ENCODE measurements at regions of chr11 and their contacts with region 1.

Region 1: DNA sequence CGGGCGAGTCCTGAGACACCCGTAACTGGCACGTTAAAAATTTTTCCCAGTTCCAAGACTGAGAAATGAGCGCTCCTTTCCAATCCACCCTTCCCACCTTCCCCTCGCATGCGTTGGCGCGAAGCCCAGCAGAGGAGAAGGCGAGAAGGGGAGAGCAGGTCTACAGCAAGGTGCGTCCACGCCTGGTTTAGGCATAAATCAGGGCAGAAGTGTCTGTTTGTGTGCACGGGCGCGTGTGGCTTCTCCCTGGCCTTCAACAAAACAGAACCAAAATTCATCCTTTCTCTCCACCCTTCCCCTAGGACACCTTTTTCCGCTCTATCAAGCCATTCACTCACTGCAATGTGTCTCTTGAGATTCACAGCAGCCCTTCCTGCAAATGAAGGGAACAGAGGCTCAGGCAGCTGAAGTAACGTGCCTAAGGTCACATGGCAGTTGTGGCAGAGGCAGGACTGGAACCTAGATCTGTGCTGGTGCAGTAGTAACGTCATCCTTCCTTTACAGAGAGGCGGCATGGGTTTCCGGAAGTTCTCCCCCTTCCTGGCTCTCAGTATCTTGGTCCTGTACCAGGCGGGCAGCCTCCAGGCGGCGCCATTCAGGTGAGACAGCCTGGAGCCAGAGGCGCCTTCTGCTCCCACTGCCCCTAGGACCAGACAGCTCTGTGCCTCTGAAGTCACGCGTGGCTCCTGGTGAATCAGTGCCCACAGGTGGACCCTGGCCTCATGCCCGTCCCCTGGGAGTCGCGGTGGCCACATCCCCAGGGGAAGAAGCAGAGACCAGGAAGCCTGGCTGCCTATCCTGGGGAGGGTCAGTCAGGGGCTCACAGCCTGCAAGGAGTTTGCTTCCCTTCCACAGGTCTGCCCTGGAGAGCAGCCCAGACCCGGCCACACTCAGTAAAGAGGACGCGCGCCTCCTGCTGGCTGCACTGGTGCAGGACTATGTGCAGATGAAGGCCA is 1.1 kb downstream of the CALCB start:
- DNase-seq: no peak
- H3K4me3 ChIP-seq: no peak overlapping the region
- H3K27me3 ChIP-seq: peaks cover 21% of the 10 kb centered on the region
- CTCF ChIP-seq: peak; percentile 77

Region 2: DNA sequence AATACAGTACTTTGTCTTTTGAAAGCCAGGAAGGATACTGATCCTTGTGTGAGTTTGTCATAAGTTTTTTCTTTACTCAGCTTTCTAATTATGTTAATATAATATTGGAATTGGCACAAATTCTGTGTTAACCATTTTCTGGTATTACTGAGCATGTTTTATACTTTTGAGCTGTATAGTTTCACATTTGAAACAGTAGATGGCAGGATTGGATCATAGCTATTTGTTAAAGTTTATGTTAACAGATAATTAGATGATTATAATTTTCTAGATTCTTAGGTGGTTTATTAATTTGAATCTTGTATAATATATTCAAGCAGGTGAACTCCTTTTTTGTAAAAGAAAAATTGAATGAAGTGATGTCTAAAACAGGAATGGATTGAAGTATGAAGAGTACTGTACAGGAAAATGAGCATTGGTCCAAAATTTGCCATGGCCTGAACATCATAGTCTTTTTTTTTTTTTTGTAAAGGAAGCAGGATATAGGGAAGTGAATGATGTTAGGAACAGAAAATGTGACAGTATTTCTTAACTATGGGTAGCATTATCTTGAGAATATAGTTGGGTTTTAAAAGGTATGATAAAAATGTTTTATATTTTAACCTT is 284.5 kb before region 1 on chr11:
- CTCF ChIA-PET with region 1: interaction called, 27 read pairs
- POLR2A ChIA-PET with region 1: no interaction called
- DNase-seq: no peak
- H3K4me3 ChIP-seq: no peak overlapping the region
- H3K27me3 ChIP-seq: no peaks in the 10 kb centered on the region
- CTCF ChIP-seq: peak; percentile 41

Region 3: GRCh38 chr11:14974515-14975251 is 99.8 kb before region 1 on chr11:
- CTCF ChIA-PET with region 1: interaction called, 11 read pairs
- POLR2A ChIA-PET with region 1: no interaction called
- DNase-seq: no peak
- H3K4me3 ChIP-seq: no peak overlapping the region
- H3K27me3 ChIP-seq: peaks cover 43% of the 10 kb centered on the region
- CTCF ChIP-seq: peak; percentile 55

Region 4: DNA sequence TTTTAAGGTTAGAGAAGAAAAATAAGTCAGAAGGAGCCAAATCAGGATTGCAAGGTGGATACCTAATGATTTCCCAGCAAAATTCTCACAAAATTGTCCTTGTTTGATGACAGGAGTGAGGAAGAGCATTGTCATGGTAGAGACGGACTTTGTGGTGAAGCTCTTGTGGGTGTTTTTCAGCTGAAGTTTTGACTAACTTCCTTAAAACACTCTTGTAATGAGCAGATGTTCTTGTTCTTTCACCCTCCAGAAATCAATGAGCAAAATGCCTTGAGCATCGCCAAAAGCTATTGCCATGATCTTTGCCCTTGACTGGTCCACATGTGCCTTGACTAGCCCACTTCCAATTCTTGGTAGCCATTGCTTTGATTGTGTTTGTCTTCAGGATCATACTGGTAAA is 18.9 kb after region 1 on chr11:
- CTCF ChIA-PET with region 1: interaction called, 11 read pairs
- POLR2A ChIA-PET with region 1: no interaction called
- DNase-seq: no peak
- H3K4me3 ChIP-seq: no peak overlapping the region
- H3K27me3 ChIP-seq: no peaks in the 10 kb centered on the region; the same call in none of the 2 replicates
- CTCF ChIP-seq: no peak

Region 5: DNA sequence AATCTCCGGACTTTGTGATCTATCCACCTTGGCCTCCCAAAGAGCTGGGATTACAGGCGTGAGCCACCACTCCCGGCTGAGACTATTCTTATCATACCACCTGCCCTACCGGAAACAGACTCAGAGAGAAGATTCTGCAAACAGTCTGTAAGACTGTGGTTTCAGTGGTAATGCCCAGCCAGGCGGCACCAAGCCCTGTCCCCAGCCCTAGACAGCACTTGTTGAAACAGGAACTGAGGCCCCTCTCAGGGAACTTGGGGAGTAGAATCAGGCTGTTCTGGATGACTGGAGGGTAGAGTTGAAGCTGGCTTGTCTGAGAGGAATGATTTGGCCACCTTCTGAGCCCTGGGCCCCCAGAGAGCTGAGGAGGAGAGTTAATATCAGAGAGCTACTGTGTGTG is 38.9 kb after region 1 on chr11:
- CTCF ChIA-PET with region 1: no interaction called
- POLR2A ChIA-PET with region 1: no interaction called
- DNase-seq: no peak
- H3K4me3 ChIP-seq: no peak overlapping the region
- H3K27me3 ChIP-seq: no peaks in the 10 kb centered on the region; the same call in 1 of the 2 replicates
- CTCF ChIP-seq: no peak